Mammary epithelial cell (primary cell): ENCODE measurements at regions of chr1 and their contacts with region 1.

Region 1: GRCh38 chr1:224922404-224923164 is 6.9 kb upstream of the DNAH14 start:
- DNase-seq: peak; percentile 39
- H3K4me3 ChIP-seq: no peak overlapping the region
- H3K27ac ChIP-seq: no peak overlapping the region
- H3K4me1 ChIP-seq: no peaks in the 10 kb centered on the region
- H3K27me3 ChIP-seq: no peaks in the 10 kb centered on the region
- CTCF ChIP-seq: peak; percentile 73 to 83

Region 2: GRCh38 chr1:223695941-223696340 is 1226.6 kb before region 1 on chr1:
- CTCF ChIA-PET with region 1: no interaction called
- dilution Hi-C with region 1: no loop called
- in situ Hi-C with region 1: no loop called
- intact Hi-C with region 1: loop called (anchors 5 kb)
- DNase-seq: no peak
- H3K4me3 ChIP-seq: no peak overlapping the region
- H3K27ac ChIP-seq: no peak overlapping the region
- H3K4me1 ChIP-seq: peaks cover 19% of the 10 kb centered on the region
- H3K27me3 ChIP-seq: no peaks in the 10 kb centered on the region
- CTCF ChIP-seq: no peak

Region 3: GRCh38 chr1:224170365-224171112 is 752.0 kb before region 1 on chr1:
- CTCF ChIA-PET with region 1: interaction called, 27 read pairs
- dilution Hi-C with region 1: no loop called
- in situ Hi-C with region 1: no loop called
- intact Hi-C with region 1: no loop called
- DNase-seq: peak; percentile 28
- H3K4me3 ChIP-seq: no peak overlapping the region
- H3K27ac ChIP-seq: no peak overlapping the region
- H3K4me1 ChIP-seq: no peaks in the 10 kb centered on the region
- H3K27me3 ChIP-seq: no peaks in the 10 kb centered on the region
- CTCF ChIP-seq: peak; percentile 33 to 68

Region 4: DNA sequence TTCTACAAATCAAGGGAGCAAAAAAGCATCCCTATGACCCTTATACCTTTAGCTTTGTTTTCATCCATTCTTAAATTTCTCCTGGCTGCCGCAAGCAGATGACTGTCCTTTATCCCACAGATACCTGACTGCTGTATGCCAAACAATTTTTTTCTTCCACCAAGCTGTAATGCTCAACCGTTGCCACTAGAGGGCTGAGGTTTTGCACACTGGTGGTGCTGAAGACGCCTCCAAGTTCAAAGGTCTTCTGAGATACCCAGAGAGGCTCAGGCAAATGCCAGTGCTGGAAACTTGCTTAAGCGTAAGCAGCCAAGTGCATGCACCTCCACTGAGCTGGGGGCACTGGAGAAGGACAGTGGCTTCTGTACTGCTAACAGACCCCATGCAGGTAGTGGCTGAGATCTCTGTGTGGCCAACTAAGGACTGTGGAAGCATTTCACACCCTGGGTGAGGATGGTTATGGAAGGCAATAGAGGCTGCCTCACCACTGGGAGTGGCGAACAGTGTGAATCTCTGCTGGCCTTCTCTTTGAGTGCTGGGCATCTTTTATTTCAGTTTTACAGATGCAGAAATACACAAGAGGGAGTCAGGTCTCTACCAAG is 277.9 kb before region 1 on chr1:
- CTCF ChIA-PET with region 1: no interaction called
- dilution Hi-C with region 1: no loop called
- in situ Hi-C with region 1: no loop called
- intact Hi-C with region 1: loop called (anchors 1 kb)
- DNase-seq: peak; percentile 48
- H3K4me3 ChIP-seq: no peak overlapping the region
- H3K27ac ChIP-seq: no peak overlapping the region
- H3K4me1 ChIP-seq: no peaks in the 10 kb centered on the region
- H3K27me3 ChIP-seq: no peaks in the 10 kb centered on the region
- CTCF ChIP-seq: peak; percentile 93 to 95

Region 5: DNA sequence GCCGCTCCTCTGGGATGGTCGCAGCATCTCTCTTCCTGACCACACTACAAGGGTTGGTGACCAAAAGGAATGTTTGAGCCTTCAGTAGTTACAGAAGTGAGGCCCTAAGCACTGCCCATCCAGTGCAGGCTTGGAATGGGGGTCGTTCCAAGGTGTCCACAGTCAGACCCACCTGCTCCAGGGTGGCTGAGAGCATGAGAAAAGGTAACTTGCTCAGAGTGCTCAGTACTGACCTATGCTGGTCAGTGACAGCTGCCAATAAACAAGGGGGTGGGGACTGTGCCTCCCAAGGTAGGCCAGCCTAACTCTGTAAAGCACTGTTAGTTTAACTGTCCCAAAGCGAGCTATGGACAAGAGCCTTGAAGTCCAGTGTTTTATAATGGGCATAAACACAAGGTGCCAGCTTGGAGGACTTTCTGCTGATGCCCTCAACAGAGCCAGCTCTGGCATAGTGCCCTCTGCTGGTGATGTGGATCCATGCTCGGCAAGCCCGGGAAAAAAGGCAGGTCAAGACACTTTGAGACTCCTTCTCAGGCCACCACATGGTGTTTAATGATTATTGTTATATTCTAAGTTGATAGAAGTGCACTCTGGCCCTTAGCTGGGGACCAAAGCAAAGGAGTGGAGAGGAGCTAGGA is 71.3 kb before region 1 on chr1:
- CTCF ChIA-PET with region 1: interaction called, 4 read pairs
- dilution Hi-C with region 1: no loop called
- in situ Hi-C with region 1: no loop called
- intact Hi-C with region 1: loop called (anchors 1 kb)
- DNase-seq: peak; percentile 44
- H3K4me3 ChIP-seq: no peak overlapping the region
- H3K27ac ChIP-seq: no peak overlapping the region
- H3K4me1 ChIP-seq: no peaks in the 10 kb centered on the region
- H3K27me3 ChIP-seq: no peaks in the 10 kb centered on the region
- CTCF ChIP-seq: peak; percentile 87 to 91